Colonic mucosa (tissue), 4 donors: ENCODE measurements at regions of chr1 and their contacts with region 1.

Region 1: DNA sequence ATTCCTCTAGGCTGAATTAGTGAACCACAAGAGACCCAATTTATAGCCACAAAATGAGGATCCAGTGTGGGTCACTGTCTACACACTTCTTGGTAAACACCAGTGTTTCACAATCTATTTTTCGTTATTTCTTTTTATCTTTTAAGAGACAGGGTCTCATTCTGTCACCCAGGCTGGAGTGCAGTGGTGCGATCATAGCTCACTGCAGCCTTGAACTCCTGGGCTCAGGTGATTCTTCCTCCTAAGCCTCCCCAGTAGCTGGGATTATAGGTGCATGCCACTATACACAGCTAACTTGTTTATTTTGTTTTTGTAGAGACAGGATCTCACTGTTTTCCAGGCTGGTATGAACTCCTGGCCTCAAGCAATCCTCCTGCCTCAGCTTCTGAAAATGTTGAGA is 29.3 kb upstream of the SLC45A3 start:
- DNase-seq: no peak
- H3K4me3 ChIP-seq: no peak overlapping the region
- H3K27ac ChIP-seq: no peak overlapping the region
- H3K4me1 ChIP-seq: peaks cover 3% of the 10 kb centered on the region
- H3K27me3 ChIP-seq: no peaks in the 10 kb centered on the region
- CTCF ChIP-seq: no peak

Region 2: DNA sequence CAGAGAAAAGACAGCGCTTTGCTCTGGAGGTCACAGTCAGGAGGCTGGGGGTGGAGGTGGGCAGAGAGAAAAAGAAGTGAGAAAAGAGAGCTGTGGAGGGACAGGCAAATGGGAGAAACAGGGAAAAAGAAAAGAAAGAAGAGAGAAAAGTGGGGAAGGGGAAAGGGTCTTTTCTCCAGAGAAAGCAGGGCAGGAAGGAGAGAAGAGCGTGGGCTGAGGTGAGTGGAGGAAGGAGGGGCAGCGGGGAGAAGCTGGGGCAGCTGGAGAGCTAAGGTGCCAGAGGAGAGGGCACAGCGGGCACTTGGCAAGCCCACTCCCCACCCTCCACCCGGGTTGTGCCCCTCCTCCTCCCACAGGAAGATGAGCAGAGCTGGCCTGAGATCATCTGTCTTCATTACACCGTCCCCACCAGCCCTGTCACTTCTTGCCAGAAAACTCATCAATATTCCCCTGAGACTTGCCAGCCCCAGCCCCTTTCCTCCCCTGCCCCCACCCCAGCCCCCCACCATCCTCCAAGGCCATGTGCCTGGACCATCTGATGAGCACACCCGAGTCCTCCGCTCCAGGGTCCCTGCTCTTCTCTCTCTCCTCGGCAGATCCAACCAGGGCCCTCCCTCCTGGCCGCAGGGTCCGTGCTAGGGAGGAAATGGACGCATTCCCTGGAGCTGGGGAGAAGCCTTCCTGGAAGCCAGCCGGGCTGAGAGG is 236.8 kb before region 1 on chr1:
- intact Hi-C with region 1: no loop called
- DNase-seq: no peak
- H3K4me3 ChIP-seq: no peak overlapping the region
- H3K27ac ChIP-seq: no peak overlapping the region
- H3K4me1 ChIP-seq: no peaks in the 10 kb centered on the region
- H3K27me3 ChIP-seq: no peaks in the 10 kb centered on the region
- CTCF ChIP-seq: no peak

Region 3: DNA sequence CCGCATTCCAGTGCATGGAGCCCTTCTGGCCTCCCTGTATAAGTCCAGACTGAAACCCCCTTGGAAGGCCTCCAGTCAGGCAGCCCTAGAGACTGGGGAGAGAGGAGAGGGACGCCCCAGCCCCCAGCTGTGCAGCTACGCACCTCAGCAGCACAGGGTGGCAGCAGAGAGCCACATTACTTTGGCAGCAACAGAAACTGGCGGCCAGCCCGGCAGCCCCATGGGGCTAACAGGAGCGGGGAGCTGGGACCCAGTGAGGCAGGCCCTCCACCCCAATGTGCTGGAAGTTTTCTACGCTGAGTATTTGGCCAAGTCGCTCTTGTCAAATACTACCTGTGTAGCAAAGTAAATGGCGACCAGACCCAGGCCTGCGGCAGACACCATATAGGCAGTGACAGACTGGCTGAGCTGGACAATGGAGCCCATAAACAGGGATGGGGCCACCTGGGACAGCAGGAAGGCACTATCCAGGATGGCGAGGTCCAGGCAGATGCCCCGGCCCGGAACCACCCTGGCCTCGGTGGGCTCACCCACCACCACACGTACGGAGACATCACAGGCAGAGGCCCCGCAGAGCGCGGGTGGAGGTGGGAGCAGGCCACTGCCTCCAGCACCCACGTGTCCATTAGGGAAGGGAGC is 50.6 kb before region 1 on chr1:
- intact Hi-C with region 1: loop called (anchors 1 kb)
- DNase-seq: peak; percentile 82
- H3K4me3 ChIP-seq: no peak overlapping the region
- H3K27ac ChIP-seq: no peak overlapping the region
- H3K4me1 ChIP-seq: no peaks in the 10 kb centered on the region
- H3K27me3 ChIP-seq: no peaks in the 10 kb centered on the region
- CTCF ChIP-seq: peak; percentile 89